ENCODE measurements at regions of chr3 and their contacts with region 1.

Region 1: GRCh38 chr3:59367150-59367549 is 317.3 kb upstream of the CFAP20DC start:
- DNase-seq: peak; percentile 64
- H3K4me3 ChIP-seq: no peak overlapping the region
- H3K27ac ChIP-seq: no peak overlapping the region
- H3K4me1 ChIP-seq: peaks cover 7% of the 10 kb centered on the region
- H3K27me3 ChIP-seq: no peaks in the 10 kb centered on the region
- CTCF ChIP-seq: no peak

Region 2: GRCh38 chr3:59072681-59073080 is 294.5 kb before region 1 on chr3:
- CTCF ChIA-PET with region 1: no interaction called
- dilution Hi-C with region 1: no loop called
- in situ Hi-C with region 1: no loop called
- intact Hi-C with region 1: no loop called
- DNase-seq: no peak
- H3K4me3 ChIP-seq: no peak overlapping the region
- H3K27ac ChIP-seq: no peak overlapping the region
- H3K4me1 ChIP-seq: no peaks in the 10 kb centered on the region
- H3K27me3 ChIP-seq: no peaks in the 10 kb centered on the region
- CTCF ChIP-seq: no peak

Region 3: DNA sequence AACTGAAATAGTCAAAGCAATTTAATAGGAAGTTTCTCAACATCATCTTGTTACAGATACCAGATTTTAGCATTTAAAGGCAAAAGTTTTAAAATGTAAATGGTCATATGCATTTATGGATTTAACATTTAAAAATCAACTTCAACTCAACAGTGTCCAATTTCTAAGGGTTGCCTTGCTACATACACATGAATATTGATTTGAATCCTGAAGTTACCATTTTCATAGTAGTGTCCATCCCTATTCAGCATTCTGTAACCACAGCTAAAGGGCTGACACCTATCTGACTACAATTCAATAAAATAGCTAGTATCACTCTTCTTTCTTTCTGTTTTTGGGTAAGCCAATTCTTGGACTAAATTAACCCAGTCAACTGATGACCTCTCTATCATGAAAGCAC is 153.3 kb before region 1 on chr3:
- CTCF ChIA-PET with region 1: no interaction called
- dilution Hi-C with region 1: no loop called
- in situ Hi-C with region 1: no loop called
- intact Hi-C with region 1: no loop called
- DNase-seq: no peak
- H3K4me3 ChIP-seq: no peak overlapping the region
- H3K27ac ChIP-seq: no peak overlapping the region
- H3K4me1 ChIP-seq: peaks cover 12% of the 10 kb centered on the region
- H3K27me3 ChIP-seq: no peaks in the 10 kb centered on the region
- CTCF ChIP-seq: no peak

Region 4: DNA sequence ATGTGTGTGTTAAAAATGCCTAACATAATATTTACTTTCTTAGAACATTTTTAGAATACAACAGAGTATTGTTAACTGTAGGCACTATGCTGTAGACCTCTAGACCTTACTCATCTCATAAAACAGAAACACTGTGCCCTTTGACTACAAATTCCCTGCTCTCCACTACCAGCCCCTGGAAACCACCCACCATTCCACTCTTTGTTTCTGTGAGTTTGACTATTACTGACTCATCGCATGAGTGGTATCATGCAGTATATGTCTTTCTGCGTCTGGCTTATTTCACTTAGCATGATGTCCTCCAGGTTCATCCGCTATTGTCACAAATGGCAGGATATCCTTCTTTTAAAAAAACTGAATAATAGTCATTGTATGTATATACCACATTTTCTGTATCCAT is 100.6 kb before region 1 on chr3:
- CTCF ChIA-PET with region 1: no interaction called
- dilution Hi-C with region 1: loop called (anchors 5 kb)
- in situ Hi-C with region 1: no loop called
- intact Hi-C with region 1: no loop called
- DNase-seq: peak; percentile 97
- H3K4me3 ChIP-seq: no peak overlapping the region
- H3K27ac ChIP-seq: peak overlapping the region; percentile 71
- H3K4me1 ChIP-seq: peaks cover 37% of the 10 kb centered on the region
- H3K27me3 ChIP-seq: no peaks in the 10 kb centered on the region
- CTCF ChIP-seq: no peak

Region 5: DNA sequence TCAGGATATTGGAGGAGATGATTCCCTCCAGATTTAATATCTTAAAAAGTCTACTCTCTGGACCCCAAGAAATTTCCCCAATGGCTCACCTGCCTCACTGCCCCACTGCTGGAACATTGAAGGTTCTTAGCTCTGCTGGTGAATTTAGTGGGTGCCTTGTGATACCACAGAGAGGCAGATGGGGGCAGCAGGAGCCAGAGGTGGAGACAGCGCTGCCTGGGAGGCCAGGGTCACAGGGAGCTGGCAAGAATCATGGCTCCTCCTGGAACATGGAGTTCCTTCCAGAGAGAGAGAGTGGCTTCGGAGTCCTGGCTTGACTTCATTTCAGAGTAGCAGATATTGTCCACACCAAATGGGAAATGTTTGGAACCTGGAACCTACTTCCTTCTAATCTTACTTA is 53.8 kb before region 1 on chr3:
- CTCF ChIA-PET with region 1: no interaction called
- dilution Hi-C with region 1: no loop called
- in situ Hi-C with region 1: no loop called
- intact Hi-C with region 1: no loop called
- DNase-seq: peak; percentile 26
- H3K4me3 ChIP-seq: no peak overlapping the region
- H3K27ac ChIP-seq: no peak overlapping the region
- H3K4me1 ChIP-seq: peaks cover 15% of the 10 kb centered on the region
- H3K27me3 ChIP-seq: no peaks in the 10 kb centered on the region
- CTCF ChIP-seq: peak; percentile 59 to 78